Tibial artery (tissue), 4 donors: ENCODE measurements at regions of chr1 and their contacts with region 1.

Region 1: DNA sequence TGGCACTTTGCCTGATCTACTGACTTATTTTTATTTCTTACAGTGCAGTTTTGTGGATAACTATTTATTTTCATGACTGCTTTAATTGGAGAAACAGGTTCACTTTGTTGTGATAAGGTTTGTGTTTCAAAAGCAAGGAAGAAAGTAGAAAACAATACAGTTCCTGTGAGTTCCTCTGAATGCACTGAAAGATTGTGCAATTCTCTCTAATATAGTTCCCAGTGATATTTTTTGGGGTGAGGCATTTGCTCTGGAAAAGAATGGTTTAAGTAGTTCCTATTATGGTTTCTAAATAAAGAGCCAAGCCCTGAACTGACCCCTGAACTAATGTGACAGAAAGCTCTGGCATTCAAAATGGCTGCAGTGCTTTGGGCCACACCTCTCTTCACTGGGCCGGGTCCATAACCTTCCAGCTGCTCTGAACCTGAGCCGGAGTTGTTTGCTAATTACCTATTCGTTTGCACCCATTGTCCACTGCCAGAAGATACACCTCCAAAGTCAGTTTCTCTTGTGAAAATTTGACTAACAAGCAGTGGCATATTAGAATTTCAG is 56.6 kb upstream of the VTCN1 start:
- DNase-seq: no peak
- H3K4me3 ChIP-seq: no peak overlapping the region
- H3K27ac ChIP-seq: no peak overlapping the region
- H3K4me1 ChIP-seq: peaks cover 0 to 17% (median 6%) of the 10 kb centered on the region in 4 donors
- H3K27me3 ChIP-seq: no peaks in the 10 kb centered on the region
- CTCF ChIP-seq: no peak

Region 2: DNA sequence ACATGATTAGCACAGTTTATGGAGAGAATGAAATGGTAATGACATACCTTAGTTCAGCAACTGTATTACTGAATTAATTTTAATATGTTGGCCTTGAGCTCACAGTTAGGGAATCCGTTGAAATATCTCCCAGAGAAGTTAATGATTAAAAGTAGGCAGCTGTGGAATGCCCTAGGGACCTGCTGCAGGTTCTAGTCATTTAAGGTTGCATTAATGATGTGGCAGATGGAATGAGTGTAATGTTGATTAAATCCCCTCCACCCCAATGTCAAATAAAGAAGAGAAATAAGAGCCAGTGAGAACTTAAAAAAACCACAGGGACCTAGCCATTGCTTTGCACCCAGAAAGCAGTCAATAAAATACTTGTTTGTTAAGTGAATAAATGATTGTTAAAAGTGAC is 105.4 kb before region 1 on chr1:
- intact Hi-C with region 1: no loop called
- DNase-seq: no peak
- H3K4me3 ChIP-seq: no peak overlapping the region
- H3K27ac ChIP-seq: no peak overlapping the region
- H3K4me1 ChIP-seq: no peaks in the 10 kb centered on the region
- H3K27me3 ChIP-seq: peaks cover 0 to 5% of the 10 kb centered on the region in 2 donors
- CTCF ChIP-seq: no peak

Region 3: DNA sequence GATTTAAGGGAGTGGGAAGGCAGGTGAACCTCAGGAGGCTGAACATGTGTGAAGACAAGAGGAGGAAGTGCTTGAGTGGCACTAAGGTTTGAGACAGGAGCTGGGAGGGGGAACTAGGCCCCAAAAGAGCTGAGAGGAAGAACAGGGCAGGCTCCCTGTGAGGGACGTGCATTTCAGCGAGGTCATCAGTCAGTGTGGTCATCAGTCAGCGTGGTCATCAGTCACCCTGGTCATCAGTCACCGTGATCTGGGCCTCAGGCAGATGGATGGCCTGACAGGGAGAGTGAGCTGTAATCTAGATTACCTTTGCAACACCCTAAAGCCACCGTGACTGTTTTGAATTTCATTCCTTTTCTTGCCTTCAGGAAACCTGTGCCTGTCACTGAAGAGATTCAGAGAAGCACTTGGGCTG is 85.7 kb before region 1 on chr1:
- intact Hi-C with region 1: no loop called
- DNase-seq: no peak
- H3K4me3 ChIP-seq: no peak overlapping the region
- H3K27ac ChIP-seq: no peak overlapping the region
- H3K4me1 ChIP-seq: peaks cover 0 to 5% (median 0%) of the 10 kb centered on the region in 4 donors
- H3K27me3 ChIP-seq: no peaks in the 10 kb centered on the region
- CTCF ChIP-seq: no peak

Region 4: DNA sequence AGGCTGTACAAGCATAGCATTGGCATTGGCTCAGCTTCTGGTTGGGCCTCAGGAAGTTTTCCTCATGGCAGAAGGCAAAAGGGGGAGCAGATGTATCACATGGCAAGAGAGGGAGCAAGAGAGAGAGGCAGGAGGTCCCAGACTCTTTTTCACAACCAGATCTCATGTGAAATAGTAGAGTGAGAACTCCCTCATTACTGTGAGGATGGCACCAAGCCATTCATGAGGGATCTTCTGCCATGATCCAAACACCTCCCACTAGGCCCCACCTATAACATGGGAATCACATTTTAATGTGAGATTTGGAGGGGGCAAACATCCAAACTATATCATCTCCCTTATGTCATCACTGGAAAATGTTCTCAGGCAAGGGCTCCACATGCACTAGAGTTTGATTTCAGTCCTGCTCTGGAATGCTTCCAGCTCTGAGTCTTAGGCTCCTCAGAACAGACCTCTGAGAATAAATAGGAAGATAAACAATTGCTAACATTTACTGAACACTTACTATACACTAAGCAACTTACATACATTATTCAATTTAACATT is 17.2 kb before region 1 on chr1:
- intact Hi-C with region 1: loop called (anchors 2 kb)
- DNase-seq: no peak
- H3K4me3 ChIP-seq: no peak overlapping the region
- H3K27ac ChIP-seq: no peak overlapping the region
- H3K4me1 ChIP-seq: no peaks in the 10 kb centered on the region
- H3K27me3 ChIP-seq: no peaks in the 10 kb centered on the region
- CTCF ChIP-seq: no peak